H1 (cell line): ENCODE measurements at regions of chr21 and their contacts with region 1.

Region 1: DNA sequence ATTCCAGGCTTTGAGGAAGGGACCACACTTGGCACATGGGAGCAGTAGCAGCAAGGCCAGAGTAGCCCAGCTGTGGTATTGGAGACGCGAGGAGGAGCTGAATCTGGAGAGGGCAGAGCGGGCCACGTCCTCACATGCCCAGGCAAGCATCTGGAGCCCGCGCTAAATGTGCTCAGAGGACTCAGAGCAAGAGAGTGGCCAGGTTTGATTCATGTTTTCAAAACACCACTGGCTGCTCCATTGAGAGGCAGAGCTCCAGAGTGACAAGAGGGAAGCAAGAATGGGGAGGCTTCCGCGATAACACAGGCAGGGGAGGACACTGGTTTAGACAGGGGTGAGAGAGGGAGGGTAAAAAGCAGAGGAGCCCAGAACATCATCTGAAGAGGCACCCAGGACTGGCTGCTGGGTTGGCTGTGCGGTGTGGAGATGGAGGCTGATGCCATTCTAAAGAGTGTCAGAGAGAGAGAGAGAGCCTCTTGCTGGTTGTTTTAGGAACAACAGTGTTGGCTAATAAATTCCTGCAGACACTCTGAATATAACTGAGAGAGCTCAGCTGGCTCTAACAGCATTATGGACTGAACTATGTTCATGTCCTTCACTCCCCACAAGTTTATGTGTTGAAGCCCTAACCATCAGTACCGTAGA is 32.3 kb downstream of the RCAN1 start:
- DNase-seq: no peak
- H3K4me3 ChIP-seq: no peak overlapping the region
- H3K27ac ChIP-seq: no peak overlapping the region
- H3K4me1 ChIP-seq: no peaks in the 10 kb centered on the region
- H3K27me3 ChIP-seq: no peaks in the 10 kb centered on the region
- CTCF ChIP-seq: peak in 2 of 3 experiments; percentile 61 to 68; a peak in 3 of 4 replicates
- EP300 ChIP-seq: no peak
- POLR2A ChIP-seq: no peak
- RAD21 ChIP-seq: peak; percentile 77 to 81

Region 2: DNA sequence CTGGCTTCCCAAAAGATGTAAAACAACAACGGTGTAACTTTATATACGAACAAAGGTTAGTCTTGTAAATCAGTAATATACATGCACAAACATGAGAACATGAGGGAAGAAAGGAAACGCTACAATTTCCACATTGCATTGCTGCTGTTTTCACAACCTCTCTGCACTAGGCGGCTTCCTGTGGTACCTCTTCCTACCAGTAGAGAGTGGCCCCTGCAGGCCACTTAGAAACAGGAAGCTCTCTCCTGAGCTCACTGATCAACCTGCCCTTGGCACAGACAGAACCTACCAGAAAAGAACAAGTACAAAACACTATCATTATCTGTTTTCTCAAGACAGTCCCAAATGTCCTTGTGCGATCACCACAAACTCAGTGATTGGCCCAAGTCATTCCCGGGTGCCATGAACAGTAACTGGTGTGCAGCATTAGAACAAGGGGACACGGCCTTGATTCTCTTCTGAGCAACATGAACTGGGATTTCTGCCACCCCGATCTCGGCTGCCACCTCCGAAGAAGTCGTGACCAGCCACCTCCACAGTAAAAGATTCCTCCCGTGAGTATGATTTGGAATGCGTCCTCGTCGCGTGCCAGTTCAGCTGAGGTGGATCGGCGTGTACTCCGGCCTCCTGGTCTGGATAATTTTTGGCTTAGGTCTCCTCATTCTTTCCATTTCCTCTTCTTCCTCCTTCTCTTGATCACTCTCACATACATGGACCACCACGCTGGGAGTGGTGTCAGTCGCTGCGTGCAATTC is 65.0 kb before region 1 on chr21:
- CTCF ChIA-PET with region 1: interaction called, 112 read pairs
- POLR2A ChIA-PET with region 1: no interaction called
- DNase-seq: no peak
- H3K4me3 ChIP-seq: no peak overlapping the region
- H3K27ac ChIP-seq: no peak overlapping the region
- H3K4me1 ChIP-seq: peaks cover 0 to 4% (median 0%) of the 10 kb centered on the region in 4 experiments; a peak in 2 of 7 replicates
- H3K27me3 ChIP-seq: no peaks in the 10 kb centered on the region
- CTCF ChIP-seq: peak; percentile 32 to 76 (median 63)
- EP300 ChIP-seq: no peak
- POLR2A ChIP-seq: no peak
- RAD21 ChIP-seq: peak; percentile 53 to 68

Region 3: GRCh38 chr21:34526618-34527290 is 55.9 kb before region 1 on chr21:
- CTCF ChIA-PET with region 1: interaction called, 10 read pairs
- POLR2A ChIA-PET with region 1: no interaction called
- DNase-seq: no peak
- H3K4me3 ChIP-seq: no peak overlapping the region
- H3K27ac ChIP-seq: no peak overlapping the region
- H3K4me1 ChIP-seq: peaks cover 8 to 19% (median 14%) of the 10 kb centered on the region in 4 experiments
- H3K27me3 ChIP-seq: no peaks in the 10 kb centered on the region; a peak in 2 of 7 replicates
- CTCF ChIP-seq: no peak
- EP300 ChIP-seq: no peak
- POLR2A ChIP-seq: no peak
- RAD21 ChIP-seq: no peak

Region 4: DNA sequence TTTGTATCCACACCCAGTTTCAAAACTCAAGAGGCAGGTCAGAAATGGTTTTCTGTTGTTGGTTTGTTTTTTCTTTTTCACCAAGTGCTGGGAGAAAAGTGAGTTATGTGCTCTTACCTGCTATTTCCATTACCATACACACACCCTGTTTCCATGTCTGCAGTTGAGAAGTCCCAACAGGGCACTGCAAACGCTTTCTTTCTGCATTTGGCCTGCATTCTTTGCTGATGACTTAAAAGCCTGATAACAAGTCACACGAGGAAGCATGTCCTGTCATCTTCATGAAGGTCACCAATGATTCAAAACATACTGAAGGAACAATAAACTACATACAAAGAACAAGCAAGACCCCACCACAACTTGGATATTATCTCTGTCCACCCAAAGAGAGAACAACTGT is 45.8 kb before region 1 on chr21:
- CTCF ChIA-PET with region 1: no interaction called
- POLR2A ChIA-PET with region 1: no interaction called
- DNase-seq: no peak
- H3K4me3 ChIP-seq: no peak overlapping the region
- H3K27ac ChIP-seq: no peak overlapping the region
- H3K4me1 ChIP-seq: peaks cover 0 to 6% (median 0%) of the 10 kb centered on the region in 4 experiments; a peak in 1 of 7 replicates
- H3K27me3 ChIP-seq: no peaks in the 10 kb centered on the region
- CTCF ChIP-seq: no peak
- EP300 ChIP-seq: no peak
- POLR2A ChIP-seq: no peak
- RAD21 ChIP-seq: no peak

Region 5: DNA sequence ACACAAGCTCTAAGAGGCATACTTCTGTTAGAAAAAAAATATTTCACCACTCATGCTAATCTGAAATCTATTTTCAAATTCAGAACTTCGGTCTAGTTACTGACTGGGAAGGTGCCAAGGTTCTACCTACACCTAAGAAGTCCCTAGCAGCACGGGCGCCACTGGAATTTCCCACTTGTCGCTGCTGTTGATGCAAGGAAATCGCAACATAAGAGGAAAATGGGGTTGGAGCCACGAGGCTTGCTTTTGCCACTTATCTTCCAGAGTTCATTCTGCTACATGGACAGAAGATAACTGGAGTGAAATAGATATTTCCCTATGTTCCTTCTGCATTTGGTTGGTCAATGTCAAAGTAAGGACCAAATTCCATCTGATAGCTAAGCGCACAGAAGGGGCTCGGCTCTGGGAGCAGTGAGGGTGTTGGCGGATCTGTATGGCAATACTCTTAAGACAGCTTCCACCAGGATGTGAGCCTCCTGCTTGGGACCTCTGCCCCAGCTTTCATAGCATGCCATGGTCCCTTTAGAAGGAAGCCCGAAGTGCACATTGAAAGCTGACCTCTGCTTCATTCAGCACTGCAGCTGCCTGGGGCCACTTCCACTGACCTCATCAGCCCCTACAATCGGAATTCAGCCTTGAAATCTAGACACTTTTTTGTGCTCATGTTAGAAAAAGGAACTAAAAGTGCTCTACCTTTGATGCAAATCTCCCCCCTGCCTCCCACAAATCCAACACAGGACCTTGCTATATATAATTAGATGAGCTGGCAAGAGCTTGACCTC is 14.8 kb before region 1 on chr21:
- CTCF ChIA-PET with region 1: interaction called, 13 read pairs
- POLR2A ChIA-PET with region 1: no interaction called
- DNase-seq: no peak
- H3K4me3 ChIP-seq: no peak overlapping the region
- H3K27ac ChIP-seq: no peak overlapping the region
- H3K4me1 ChIP-seq: no peaks in the 10 kb centered on the region
- H3K27me3 ChIP-seq: no peaks in the 10 kb centered on the region; a peak in 1 of 7 replicates
- CTCF ChIP-seq: no peak
- EP300 ChIP-seq: no peak
- POLR2A ChIP-seq: no peak
- RAD21 ChIP-seq: no peak